Left lung (tissue), 14 donors: ENCODE measurements at regions of chr12 and their contacts with region 1.

Region 1: GRCh38 chr12:114508529-114509129 is 102.7 kb upstream of the TBX5 start:
- DNase-seq: peak in 3 of 4 donors; percentile 53 to 89 (median 81)
- ATAC-seq: peak; percentile 92
- H3K4me3 ChIP-seq: no peak overlapping the region
- H3K27ac ChIP-seq: no peak overlapping the region
- H3K4me1 ChIP-seq: no peaks in the 10 kb centered on the region
- H3K27me3 ChIP-seq: peaks cover 0 to 46% of the 10 kb centered on the region in 2 donors
- CTCF ChIP-seq: peak; percentile 53 to 69

Region 2: DNA sequence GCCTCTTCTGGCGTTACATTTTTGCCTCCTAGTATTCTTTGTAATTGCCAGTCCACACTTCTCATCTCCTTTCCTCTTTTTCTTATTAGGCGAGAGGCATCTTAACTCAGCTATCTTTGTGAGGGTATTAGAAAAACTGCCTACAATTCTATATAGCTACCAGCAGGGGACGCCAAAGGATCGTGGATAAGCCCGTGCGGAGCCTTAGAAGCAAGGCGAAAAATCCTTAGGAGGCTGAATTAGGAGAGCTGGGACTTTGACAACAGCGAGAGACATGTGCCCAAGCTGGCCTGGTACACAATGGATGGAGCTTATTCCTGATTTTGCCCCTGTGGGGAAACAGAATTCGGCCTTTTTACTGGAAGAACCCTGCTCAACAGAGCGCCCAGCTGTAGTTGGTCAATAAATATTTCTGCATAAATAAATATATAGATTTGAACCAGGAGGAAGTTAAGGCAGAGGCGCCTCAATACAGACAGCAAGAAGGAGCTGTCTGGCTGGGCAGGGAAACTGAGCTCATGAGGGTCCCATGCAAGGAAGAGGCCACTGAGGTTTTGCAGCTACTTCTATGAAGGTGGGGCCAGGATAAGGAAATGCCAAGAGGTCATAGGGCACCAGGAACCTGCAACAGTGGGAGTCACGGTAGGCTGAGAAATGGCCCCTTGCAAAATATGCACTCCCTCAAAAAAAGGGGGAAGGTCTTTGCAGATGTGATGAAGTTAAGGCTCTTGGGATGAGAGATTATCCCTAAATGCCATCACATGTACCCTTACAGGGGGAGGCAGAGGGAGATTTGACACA is 527.9 kb before region 1 on chr12:
- intact Hi-C with region 1: loop called in 1 of 2 experiments (anchors 5 kb)
- DNase-seq: peak in 2 of 4 donors; percentile 74 to 85
- ATAC-seq: peak; percentile 96
- H3K4me3 ChIP-seq: no peak overlapping the region
- H3K27ac ChIP-seq: no peak overlapping the region
- H3K4me1 ChIP-seq: no peaks in the 10 kb centered on the region
- H3K27me3 ChIP-seq: peaks cover 0 to 58% of the 10 kb centered on the region in 2 donors
- CTCF ChIP-seq: peak; percentile 70 to 98

Region 3: GRCh38 chr12:114166362-114166761 is 342.3 kb before region 1 on chr12:
- intact Hi-C with region 1: loop called in 1 of 2 experiments (anchors 10 kb)
- DNase-seq: peak in 2 of 4 donors; percentile 61 to 77
- ATAC-seq: peak; percentile 78
- H3K4me3 ChIP-seq: no peak overlapping the region
- H3K27ac ChIP-seq: no peak overlapping the region
- H3K4me1 ChIP-seq: no peaks in the 10 kb centered on the region
- H3K27me3 ChIP-seq: no peaks in the 10 kb centered on the region
- CTCF ChIP-seq: peak; percentile 35 to 38